ENCODE measurements at regions of chr17 and their contacts with region 1.

Region 1: DNA sequence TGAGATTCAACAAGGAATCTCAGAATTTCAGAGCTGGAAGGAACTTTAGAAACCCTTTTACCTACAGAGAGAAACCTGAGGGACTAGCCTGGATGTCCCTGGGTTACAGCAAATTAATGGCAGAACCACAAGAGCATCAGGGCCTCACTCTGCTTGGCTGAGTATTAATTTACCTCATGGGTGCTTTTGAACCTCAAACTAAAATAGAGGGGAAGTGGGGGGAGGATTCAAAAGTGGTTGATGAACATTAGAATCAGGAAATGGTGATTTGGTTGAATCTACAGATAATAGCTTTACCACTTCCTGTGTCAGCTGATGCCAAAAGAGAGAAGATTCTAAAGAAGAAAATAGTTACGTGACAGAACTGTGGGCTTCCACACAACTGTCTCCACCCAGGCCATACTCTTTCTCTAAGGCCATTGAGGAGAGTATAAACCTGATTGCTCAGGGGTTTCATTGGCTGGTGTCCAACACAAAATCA is 11.3 kb upstream of the SKAP1 start:
- DNase-seq: peak; percentile 85
- ATAC-seq: peak; percentile 75
- H3K4me3 ChIP-seq: peak overlapping the region in 1 of 5 experiments; percentile 42
- H3K4me3 Mint-ChIP-seq: peak overlapping the region; percentile 68
- H3K27ac ChIP-seq: peak overlapping the region; percentile 51 to 52
- H3K27ac Mint-ChIP-seq: peak overlapping the region; percentile 91
- H3K4me1 ChIP-seq: peaks cover 86 to 90% of the 10 kb centered on the region in 2 donors
- H3K4me1 Mint-ChIP-seq: peaks cover 88% of the 10 kb centered on the region
- H3K27me3 ChIP-seq: peaks cover 0 to 26% (median 4%) of the 10 kb centered on the region in 4 experiments
- H3K27me3 Mint-ChIP-seq: peaks cover 19% of the 10 kb centered on the region
- CTCF ChIP-seq: no peak

Region 2: GRCh38 chr17:47941236-47941994 is 499.9 kb before region 1 on chr17 and contains the start of gene PNPO:
- CTCF ChIA-PET with region 1: no interaction called
- POLR2A ChIA-PET with region 1: no interaction called
- intact Hi-C with region 1: no loop called
- DNase-seq: peak; percentile 94
- ATAC-seq: peak; percentile 99
- H3K4me3 ChIP-seq: peak within 1 kb of the TSS; percentile 50 to 84 (median 76)
- H3K4me3 Mint-ChIP-seq: peak within 1 kb of the TSS; percentile 88
- H3K27ac ChIP-seq: peak within 1 kb of the TSS; percentile 63 to 83
- H3K27ac Mint-ChIP-seq: peak within 1 kb of the TSS; percentile 82
- H3K4me1 ChIP-seq: peaks cover 11 to 22% of the 10 kb centered on the region in 2 donors
- H3K4me1 Mint-ChIP-seq: peaks cover 31% of the 10 kb centered on the region
- H3K27me3 ChIP-seq: no peaks in the 10 kb centered on the region
- H3K27me3 Mint-ChIP-seq: no peaks in the 10 kb centered on the region
- CTCF ChIP-seq: no peak
- total RNA-seq, gene PNPO: 12.4 and 14.7 TPM in 2 replicates

Region 3: DNA sequence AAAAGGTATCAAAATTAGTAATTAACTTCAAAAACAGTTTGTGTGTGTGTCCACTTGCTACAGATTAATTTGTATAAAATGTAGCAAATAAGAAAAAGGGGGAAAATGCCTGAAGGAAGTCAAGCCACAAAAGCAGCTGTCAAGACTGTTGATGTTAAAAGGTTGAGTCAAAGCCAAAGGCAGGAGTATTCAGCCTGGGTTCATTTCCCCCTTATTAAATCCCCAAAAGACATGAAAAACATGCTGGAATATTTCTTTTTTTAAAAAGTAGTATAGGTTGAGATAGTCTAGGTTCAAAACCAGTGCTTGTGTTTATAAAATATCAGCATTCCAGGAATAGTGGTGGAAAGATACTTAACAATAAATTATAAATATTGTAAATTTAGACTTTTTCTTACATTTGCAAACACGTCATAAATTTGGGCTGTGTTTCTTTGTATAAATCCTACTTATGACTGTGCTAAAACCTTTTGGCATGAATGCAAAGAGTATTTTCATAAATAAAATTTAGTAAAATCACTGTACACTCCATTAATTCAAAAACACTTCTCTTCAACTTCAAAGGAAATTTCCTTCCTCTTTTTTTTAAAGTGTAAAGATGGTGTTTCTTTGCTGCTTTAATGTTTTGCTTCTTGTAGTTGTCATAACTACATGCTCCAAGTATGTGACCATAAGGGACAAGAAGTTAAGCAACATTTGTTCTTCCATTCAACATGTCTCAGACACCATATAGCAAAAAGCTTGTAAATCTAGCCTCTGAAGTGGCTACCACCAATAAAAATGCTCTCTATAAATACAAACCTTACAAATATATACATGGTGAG is 83.3 kb before region 1 on chr17:
- CTCF ChIA-PET with region 1: interaction called, 3 read pairs
- POLR2A ChIA-PET with region 1: no interaction called
- intact Hi-C with region 1: loop called (anchors 5 kb)
- DNase-seq: peak; percentile 40
- ATAC-seq: peak; percentile 33
- H3K4me3 ChIP-seq: no peak overlapping the region
- H3K4me3 Mint-ChIP-seq: no peak overlapping the region
- H3K27ac ChIP-seq: peak overlapping the region; percentile 25 to 57
- H3K27ac Mint-ChIP-seq: peak overlapping the region; percentile 67
- H3K4me1 ChIP-seq: peaks cover 9 to 14% of the 10 kb centered on the region in 2 donors
- H3K4me1 Mint-ChIP-seq: peaks cover 13% of the 10 kb centered on the region
- H3K27me3 ChIP-seq: no peaks in the 10 kb centered on the region
- H3K27me3 Mint-ChIP-seq: no peaks in the 10 kb centered on the region
- CTCF ChIP-seq: no peak

Region 4: DNA sequence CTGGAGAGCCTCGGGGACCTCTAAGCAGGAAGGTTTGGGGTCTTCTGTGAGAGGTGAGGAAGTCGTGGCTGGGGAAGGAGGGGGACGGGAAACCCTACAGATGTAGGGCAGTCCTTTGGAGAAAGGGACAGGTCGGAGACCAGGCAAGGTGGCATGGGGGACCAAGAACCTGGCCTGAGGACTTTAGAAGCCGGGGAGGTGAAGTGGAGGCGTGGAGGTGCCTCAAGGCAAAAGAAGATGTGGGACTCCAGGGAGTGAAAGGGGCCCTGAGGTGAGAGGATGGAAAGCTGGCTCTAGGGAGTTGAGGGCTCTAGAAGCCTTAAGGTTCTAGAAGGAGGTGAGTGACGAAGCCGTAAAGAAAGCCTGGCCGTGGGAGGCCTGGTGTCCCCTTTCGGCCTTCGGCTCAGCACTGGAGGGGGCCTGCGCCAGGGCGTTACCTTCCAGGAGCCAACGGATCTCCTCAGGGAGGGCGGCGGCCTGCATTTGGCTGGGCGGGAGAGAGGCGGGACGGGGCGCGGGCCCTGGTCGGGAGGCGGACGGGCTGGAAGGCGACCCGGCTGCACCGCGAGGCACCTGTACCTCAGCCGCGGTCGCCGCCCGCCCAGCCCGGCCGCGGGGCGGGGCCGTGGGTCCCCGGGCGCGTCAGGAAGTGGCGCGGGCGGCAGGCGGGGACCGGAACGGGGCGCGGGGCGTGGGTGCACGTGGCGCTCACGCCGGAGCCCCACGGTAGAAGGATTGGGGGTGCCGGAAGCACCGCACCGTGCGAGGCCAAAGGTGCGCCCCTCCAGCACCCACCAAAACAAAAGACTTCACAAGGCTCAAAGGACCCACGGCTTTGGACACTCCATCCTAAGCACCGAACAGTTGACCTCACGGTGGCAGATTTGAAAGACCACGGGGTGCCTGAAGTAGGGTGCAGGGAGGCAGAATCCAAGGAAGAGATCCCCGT is 11.4 kb before region 1 on chr17 and contains the start of gene SKAP1:
- CTCF ChIA-PET with region 1: interaction called, 3 read pairs
- POLR2A ChIA-PET with region 1: interaction called, 7 read pairs
- intact Hi-C with region 1: loop called (anchors 1 kb)
- DNase-seq: peak; percentile 72
- ATAC-seq: peak; percentile 86
- H3K4me3 ChIP-seq: peak within 1 kb of the TSS; percentile 50 to 88 (median 77)
- H3K4me3 Mint-ChIP-seq: peak within 1 kb of the TSS; percentile 91
- H3K27ac ChIP-seq: peak within 1 kb of the TSS; percentile 80 to 81
- H3K27ac Mint-ChIP-seq: peak within 1 kb of the TSS; percentile 94
- H3K4me1 ChIP-seq: peaks cover 39 to 51% of the 10 kb centered on the region in 2 donors
- H3K4me1 Mint-ChIP-seq: peaks cover 57% of the 10 kb centered on the region
- H3K27me3 ChIP-seq: peaks cover 0 to 20% (median 7%) of the 10 kb centered on the region in 4 experiments
- H3K27me3 Mint-ChIP-seq: peaks cover 12% of the 10 kb centered on the region
- CTCF ChIP-seq: no peak
- total RNA-seq, gene SKAP1: 33.1 TPM in 2 replicates